Activated CD4-positive, alpha-beta memory T cell treated with anti-CD3 and anti-CD28 coated beads, Interleukin-2, amount 10 ng/mL, durations not matched to agents 7 days and 5 days (primary cell): ENCODE measurements at regions of chr6 and their contacts with region 1.

Region 1: DNA sequence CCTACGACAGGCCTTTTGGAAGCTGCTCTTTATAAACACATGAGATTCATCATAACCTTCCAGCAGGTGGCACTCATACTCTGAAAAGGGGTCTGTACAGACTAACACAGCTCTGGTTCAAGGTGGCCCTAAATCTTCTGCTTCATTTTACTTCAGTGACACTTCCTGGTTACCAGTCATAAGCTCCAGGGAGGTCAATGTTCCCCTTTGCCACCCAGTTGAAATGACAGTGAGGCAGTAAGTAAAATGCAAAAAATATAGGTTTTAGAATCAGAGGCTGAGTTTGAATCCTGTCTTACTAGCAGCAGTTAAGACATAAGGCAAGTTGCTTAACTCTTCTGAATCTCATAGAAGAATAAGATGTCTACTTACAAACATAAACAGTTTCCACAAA is 132.8 kb downstream of the CDK19 start:
- DNase-seq: peak; percentile 65
- H3K4me3 Mint-ChIP-seq: no peak overlapping the region
- H3K27ac Mint-ChIP-seq: peak overlapping the region; percentile 42
- H3K4me1 Mint-ChIP-seq: peaks cover 19% of the 10 kb centered on the region
- H3K27me3 Mint-ChIP-seq: no peaks in the 10 kb centered on the region

Region 2: DNA sequence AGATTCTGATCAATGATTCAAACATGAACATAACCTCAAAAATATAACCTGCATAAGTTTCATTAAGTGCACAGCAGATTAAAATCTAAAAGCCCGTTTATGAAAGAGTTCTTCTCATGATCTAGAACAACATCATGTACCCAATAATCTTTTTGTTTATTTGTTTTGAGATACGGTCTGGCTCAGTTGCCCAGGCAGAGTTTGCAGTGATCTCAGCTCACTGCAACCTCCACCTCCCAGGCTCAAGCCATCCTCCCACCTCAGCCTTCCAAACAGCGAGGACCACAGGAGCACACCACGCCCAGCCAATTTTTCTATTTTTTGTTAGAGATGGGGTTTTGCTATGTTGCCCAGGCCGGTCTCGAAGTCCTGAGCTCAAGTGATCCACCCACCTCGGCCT is 16.9 kb before region 1 on chr6:
- CTCF ChIA-PET with region 1: no interaction called
- POLR2A ChIA-PET with region 1: no interaction called
- DNase-seq: no peak
- H3K4me3 Mint-ChIP-seq: no peak overlapping the region
- H3K27ac Mint-ChIP-seq: no peak overlapping the region
- H3K4me1 Mint-ChIP-seq: no peaks in the 10 kb centered on the region
- H3K27me3 Mint-ChIP-seq: no peaks in the 10 kb centered on the region

Region 3: GRCh38 chr6:110882271-110882613 is 199.8 kb after region 1 on chr6:
- CTCF ChIA-PET with region 1: interaction called, 67 read pairs
- POLR2A ChIA-PET with region 1: interaction called, 21 read pairs
- DNase-seq: no peak
- H3K4me3 Mint-ChIP-seq: no peak overlapping the region
- H3K27ac Mint-ChIP-seq: peak overlapping the region; percentile 45
- H3K4me1 Mint-ChIP-seq: peaks cover 87% of the 10 kb centered on the region
- H3K27me3 Mint-ChIP-seq: no peaks in the 10 kb centered on the region

Region 4: DNA sequence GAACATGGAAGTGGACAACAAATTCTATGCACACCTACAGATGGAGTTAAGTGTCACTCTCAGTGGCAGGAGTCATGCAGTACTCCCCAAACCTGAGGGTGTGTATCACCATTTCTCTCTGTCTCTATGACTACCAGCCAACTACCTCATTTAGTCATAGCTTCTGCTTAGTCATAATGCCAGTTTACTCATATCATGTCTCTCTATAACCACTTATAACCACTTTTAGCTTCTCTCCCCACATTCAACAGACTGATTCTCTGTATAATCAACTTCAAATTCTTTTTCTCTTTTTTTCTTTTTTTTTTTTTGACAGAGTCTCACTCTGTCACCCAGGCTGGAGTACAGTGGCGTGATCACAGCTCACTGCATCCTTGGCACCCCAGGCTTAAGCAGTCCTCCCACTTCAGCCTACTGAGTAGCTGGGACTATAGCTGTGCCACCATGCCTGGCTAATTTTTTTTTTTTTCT is 262.3 kb after region 1 on chr6:
- CTCF ChIA-PET with region 1: interaction called, 92 read pairs
- POLR2A ChIA-PET with region 1: interaction called, 4 read pairs
- DNase-seq: peak; percentile 55
- H3K4me3 Mint-ChIP-seq: no peak overlapping the region
- H3K27ac Mint-ChIP-seq: peak overlapping the region; percentile 75
- H3K4me1 Mint-ChIP-seq: peaks cover 13% of the 10 kb centered on the region
- H3K27me3 Mint-ChIP-seq: no peaks in the 10 kb centered on the region

Region 5: DNA sequence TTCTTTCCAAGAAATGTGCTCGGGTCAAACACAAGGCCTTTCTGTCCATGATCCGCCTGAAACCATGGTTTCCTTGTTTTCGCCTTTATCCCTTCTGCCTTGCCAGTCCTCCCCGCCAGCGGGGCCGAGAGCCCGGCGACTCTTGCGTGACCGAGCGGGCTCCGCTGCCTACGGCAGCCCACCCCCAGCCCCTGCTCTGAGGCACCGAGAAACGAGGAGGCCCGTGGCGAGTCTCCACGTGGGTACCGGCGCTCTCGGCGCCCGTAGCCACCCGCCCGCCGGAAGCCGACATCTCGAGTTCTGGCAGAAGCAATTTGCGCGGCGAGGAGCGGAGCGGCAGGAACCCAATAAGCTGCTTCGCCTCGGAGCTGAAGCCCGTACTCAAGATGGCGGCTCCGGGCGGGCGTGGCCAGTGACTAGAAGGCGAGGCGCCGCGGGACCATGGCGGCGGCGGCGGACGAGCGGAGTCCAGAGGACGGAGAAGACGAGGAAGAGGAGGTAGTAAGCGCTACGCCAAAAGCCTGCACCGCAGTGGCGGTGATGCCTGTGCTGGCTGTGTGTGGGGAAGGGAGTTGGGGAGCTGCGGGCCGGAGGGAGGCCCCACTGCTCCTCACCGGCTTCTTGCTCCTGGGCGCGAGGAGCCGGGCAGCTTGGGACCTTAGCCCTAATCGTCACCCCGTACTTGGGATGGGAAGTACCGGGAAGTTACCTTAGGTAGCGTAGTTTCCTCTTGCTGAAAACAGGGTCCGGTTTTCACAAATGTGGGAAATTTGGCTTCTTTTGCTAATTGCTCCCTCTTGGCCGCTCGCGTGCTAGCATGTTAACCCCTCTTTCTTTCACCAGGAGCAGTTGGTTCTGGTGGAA is 276.1 kb after region 1 on chr6 and contains the start of gene GTF3C6:
- CTCF ChIA-PET with region 1: interaction called, 92 read pairs
- POLR2A ChIA-PET with region 1: interaction called, 3 read pairs
- DNase-seq: peak; percentile 95
- H3K4me3 Mint-ChIP-seq: peak within 1 kb of the TSS; percentile 95
- H3K27ac Mint-ChIP-seq: peak within 1 kb of the TSS; percentile 95
- H3K4me1 Mint-ChIP-seq: peaks cover 19% of the 10 kb centered on the region
- H3K27me3 Mint-ChIP-seq: no peaks in the 10 kb centered on the region
- total RNA-seq, gene GTF3C6: 83.2 to 93.3 TPM

Region 6: GRCh38 chr6:111011360-111012142 is 329.1 kb after region 1 on chr6:
- CTCF ChIA-PET with region 1: interaction called, 10 read pairs
- POLR2A ChIA-PET with region 1: no interaction called
- DNase-seq: no peak
- H3K4me3 Mint-ChIP-seq: no peak overlapping the region
- H3K27ac Mint-ChIP-seq: peak overlapping the region; percentile 7
- H3K4me1 Mint-ChIP-seq: peaks cover 4% of the 10 kb centered on the region
- H3K27me3 Mint-ChIP-seq: no peaks in the 10 kb centered on the region